Activated CD4-positive, alpha-beta memory T cell treated with anti-CD3 and anti-CD28 coated beads for 36 hours (primary cell): ENCODE measurements at regions of chr11 and their contacts with region 1.

Region 1: GRCh38 chr11:95254131-95254704 is 23.2 kb upstream of the SESN3 start:
- DNase-seq: peak; percentile 91
- H3K4me3 Mint-ChIP-seq: peak overlapping the region; percentile 81
- H3K27ac Mint-ChIP-seq: peak overlapping the region; percentile 93
- H3K4me1 Mint-ChIP-seq: peaks cover 42% of the 10 kb centered on the region
- H3K27me3 Mint-ChIP-seq: no peaks in the 10 kb centered on the region

Region 2: DNA sequence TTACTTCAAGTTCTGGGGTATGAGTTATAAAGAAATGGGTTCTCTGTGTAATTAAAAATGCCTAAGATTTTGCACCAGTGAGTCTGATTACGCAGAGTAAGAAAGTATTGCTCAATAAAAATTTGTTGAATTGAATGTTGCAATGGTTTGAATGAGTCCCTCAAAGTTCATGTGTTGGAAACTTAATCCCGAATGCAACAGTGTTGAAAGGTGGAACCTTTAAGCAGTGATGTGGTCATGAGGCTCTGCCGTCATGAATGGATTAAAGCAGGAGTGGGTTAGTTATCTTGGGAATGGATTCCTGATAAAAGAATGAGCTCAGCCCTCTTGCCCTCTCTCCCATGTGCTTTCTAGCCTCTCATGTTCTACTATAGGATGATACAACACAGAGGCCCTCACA is 29.4 kb after region 1 on chr11:
- CTCF ChIA-PET with region 1: no interaction called
- POLR2A ChIA-PET with region 1: no interaction called
- intact Hi-C with region 1: loop called (anchors 2 kb)
- DNase-seq: no peak
- H3K4me3 Mint-ChIP-seq: no peak overlapping the region
- H3K27ac Mint-ChIP-seq: no peak overlapping the region
- H3K4me1 Mint-ChIP-seq: peaks cover 10% of the 10 kb centered on the region
- H3K27me3 Mint-ChIP-seq: no peaks in the 10 kb centered on the region